ENCODE measurements at regions of chr10 and their contacts with region 1.

Region 1: DNA sequence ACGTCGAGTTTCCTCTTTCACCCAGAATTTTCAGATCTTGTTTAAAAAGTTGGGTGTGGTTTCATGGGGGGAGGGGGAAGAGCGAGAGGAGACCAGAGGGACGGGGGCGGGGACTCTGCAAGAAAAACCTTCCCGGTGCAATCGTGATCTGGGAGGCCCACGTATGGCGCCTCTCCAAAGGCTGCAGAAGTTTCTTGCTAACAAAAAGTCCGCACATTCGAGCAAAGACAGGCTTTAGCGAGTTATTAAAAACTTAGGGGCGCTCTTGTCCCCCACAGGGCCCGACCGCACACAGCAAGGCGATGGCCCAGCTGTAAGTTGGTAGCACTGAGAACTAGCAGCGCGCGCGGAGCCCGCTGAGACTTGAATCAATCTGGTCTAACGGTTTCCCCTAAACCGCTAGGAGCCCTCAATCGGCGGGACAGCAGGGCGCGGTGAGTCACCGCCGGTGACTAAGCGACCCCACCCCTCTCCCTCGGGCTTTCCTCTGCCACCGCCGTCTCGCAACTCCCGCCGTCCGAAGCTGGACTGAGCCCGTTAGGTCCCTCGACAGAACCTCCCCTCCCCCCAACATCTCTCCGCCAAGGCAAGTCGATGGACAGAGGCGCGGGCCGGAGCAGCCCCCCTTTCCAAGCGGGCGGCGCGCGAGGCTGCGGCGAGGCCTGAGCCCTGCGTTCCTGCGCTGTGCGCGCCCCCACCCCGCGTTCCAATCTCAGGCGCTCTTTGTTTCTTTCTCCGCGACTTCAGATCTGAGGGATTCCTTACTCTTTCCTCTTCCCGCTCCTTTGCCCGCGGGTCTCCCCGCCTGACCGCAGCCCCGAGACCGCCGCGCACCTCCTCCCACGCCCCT is at the start of gene VIM:
- DNase-seq: peak; percentile 91 to 98
- H3K4me3 ChIP-seq: peak within 1 kb of the TSS; percentile 87 to 93
- H3K27ac ChIP-seq: peak within 1 kb of the TSS; percentile 97 to 99
- H3K4me1 ChIP-seq: peaks cover 0 to 22% of the 10 kb centered on the region in 2 donors
- H3K27me3 ChIP-seq: no peaks in the 10 kb centered on the region
- CTCF ChIP-seq: peak in 2 of 3 experiments; percentile 12 to 13
- total RNA-seq, gene VIM: 6,230 TPM

Region 2: GRCh38 chr10:17062955-17063484 is 165.3 kb before region 1 on chr10:
- intact Hi-C with region 1: loop called (anchors 5 kb)
- DNase-seq: peak; percentile 35 to 91
- H3K4me3 ChIP-seq: peak overlapping the region in 1 of 2 donors; percentile 16
- H3K27ac ChIP-seq: peak overlapping the region; percentile 79 to 85
- H3K4me1 ChIP-seq: peaks cover 6 to 32% of the 10 kb centered on the region in 2 donors
- H3K27me3 ChIP-seq: no peaks in the 10 kb centered on the region
- CTCF ChIP-seq: no peak

Region 3: GRCh38 chr10:17216217-17216900 is 12.0 kb before region 1 on chr10:
- intact Hi-C with region 1: loop called (anchors 2 kb)
- DNase-seq: peak; percentile 32 to 81
- H3K4me3 ChIP-seq: peak overlapping the region in 1 of 2 donors; percentile 20
- H3K27ac ChIP-seq: peak overlapping the region; percentile 89 to 93
- H3K4me1 ChIP-seq: peaks cover 6 to 50% of the 10 kb centered on the region in 2 donors
- H3K27me3 ChIP-seq: no peaks in the 10 kb centered on the region
- CTCF ChIP-seq: no peak

Region 4: DNA sequence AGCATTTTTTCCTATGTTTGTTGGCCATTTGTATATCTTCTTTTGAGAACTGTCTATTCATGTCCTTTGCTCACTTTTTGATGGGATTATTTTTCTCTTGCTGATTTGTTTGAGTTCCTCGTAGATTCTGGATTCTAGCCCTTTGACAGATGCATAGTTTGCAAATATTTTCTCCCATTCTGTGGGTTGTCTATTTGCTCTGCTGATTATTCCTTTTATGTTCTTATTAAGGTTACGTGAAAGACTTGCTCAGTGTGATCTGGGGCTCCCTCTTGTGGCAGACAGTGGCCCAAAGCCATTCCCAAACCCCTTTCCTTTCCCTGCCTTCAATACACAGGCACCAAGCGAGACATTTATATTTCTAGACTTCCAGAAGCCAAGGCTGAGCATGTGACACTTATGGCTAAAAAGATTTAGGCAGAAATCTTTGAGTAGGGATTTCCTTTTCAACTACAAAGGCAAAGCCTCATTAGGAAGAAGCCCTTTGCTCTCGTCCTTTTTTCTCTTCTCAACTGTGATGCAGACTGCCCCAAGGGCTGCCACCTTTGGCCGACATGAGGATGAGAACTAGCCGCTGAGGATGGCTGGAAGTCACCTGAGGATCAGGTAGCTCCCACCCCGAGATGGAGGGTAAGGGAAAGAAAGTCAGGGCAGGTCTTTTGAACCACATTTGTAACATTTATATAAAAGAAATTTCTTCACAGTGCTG is 202.5 kb after region 1 on chr10:
- intact Hi-C with region 1: no loop called
- DNase-seq: peak in 1 of 2 donors; percentile 83
- H3K4me3 ChIP-seq: peak overlapping the region in 1 of 2 donors; percentile 3
- H3K27ac ChIP-seq: no peak overlapping the region
- H3K4me1 ChIP-seq: peaks cover 0 to 3% of the 10 kb centered on the region in 2 donors
- H3K27me3 ChIP-seq: no peaks in the 10 kb centered on the region
- CTCF ChIP-seq: peak; percentile 55 to 92 (median 87)

Region 5: DNA sequence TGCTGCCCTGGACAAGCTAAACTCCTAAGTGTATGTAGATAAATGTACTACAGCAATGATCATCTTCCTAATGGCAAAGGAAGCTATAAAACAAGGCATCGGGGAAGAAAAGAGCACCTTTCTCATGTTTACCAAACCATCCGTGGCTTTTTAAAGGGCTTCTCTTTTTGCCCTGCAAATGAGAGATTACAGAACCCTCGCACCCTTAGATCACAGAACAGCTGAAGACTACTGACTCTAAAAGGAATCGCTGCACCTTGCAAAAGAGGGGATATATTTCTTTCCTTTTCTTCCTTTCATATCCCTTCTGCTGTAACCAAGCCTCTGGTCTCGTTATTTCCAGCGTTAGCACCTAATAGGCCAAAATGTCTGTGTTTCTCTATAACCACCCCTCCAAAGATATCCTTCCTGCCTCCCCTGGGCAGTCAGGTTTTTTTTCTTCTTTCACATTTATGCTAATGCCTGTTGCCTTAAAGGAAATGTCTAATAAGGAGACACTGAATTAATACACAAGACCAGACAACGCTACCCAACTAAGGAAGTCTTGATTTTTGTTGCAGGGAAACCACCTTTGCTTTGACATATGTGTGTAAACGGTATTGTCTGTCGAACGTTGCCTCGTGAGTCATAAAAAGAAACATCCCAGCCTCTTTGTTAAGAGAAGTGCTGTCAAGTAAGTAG is 215.5 kb after region 1 on chr10:
- intact Hi-C with region 1: no loop called
- DNase-seq: no peak
- H3K4me3 ChIP-seq: no peak overlapping the region
- H3K27ac ChIP-seq: no peak overlapping the region
- H3K4me1 ChIP-seq: no peaks in the 10 kb centered on the region
- H3K27me3 ChIP-seq: no peaks in the 10 kb centered on the region
- CTCF ChIP-seq: no peak